ENCODE measurements at regions of chr7 and their contacts with region 1.

Region 1: GRCh38 chr7:158885624-158886023 is 29.3 kb downstream of the DYNC2I1 start:
- DNase-seq: peak; percentile 29 to 54 (median 53)
- H3K4me3 ChIP-seq: no peak overlapping the region
- H3K27ac ChIP-seq: no peak overlapping the region
- H3K4me1 ChIP-seq: no peaks in the 10 kb centered on the region
- H3K27me3 ChIP-seq: no peaks in the 10 kb centered on the region

Region 2: GRCh38 chr7:158461824-158462223 is 423.8 kb before region 1 on chr7:
- CTCF ChIA-PET with region 1: no interaction called
- POLR2A ChIA-PET with region 1: no interaction called
- DNase-seq: no peak
- H3K4me3 ChIP-seq: no peak overlapping the region
- H3K27ac ChIP-seq: no peak overlapping the region
- H3K4me1 ChIP-seq: no peaks in the 10 kb centered on the region
- H3K27me3 ChIP-seq: peaks cover 0 to 1% (median 0%) of the 10 kb centered on the region in 5 experiments

Region 3: GRCh38 chr7:158863611-158864506 is 21.8 kb before region 1 on chr7:
- CTCF ChIA-PET with region 1: interaction called, 11 read pairs
- POLR2A ChIA-PET with region 1: no interaction called
- DNase-seq: peak; percentile 35 to 70 (median 65)
- H3K4me3 ChIP-seq: peak overlapping the region; percentile 20 to 77 (median 48)
- H3K27ac ChIP-seq: peak overlapping the region; percentile 61 to 76
- H3K4me1 ChIP-seq: peaks cover 0 to 64% (median 56%) of the 10 kb centered on the region in 4 experiments
- H3K27me3 ChIP-seq: no peaks in the 10 kb centered on the region

Region 4: DNA sequence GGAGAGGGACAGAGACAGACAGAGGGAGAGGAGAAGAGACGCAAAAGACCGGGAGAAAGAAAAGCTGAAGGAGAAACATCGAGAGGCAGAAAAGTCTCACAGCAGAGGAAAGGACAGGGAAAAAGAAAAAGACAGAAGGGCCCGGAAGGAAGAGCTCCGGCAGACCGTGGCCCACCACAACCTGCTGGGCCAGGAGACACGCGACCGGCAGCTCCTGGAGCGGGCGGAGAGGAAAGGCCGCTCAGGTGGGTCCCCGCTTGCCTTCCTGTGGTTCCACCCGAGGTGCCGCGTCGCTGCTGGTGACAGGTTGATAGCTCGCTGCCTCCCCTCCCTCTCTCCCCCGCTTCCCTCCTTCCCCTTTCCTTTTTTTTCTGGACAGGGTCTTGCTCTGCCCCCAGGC is 14.3 kb before region 1 on chr7:
- CTCF ChIA-PET with region 1: interaction called, 11 read pairs
- POLR2A ChIA-PET with region 1: no interaction called
- DNase-seq: peak in 1 of 3 donors; percentile 29
- H3K4me3 ChIP-seq: peak overlapping the region in 2 of 7 experiments; percentile 8 to 25
- H3K27ac ChIP-seq: no peak overlapping the region
- H3K4me1 ChIP-seq: peaks cover 0 to 33% (median 30%) of the 10 kb centered on the region in 4 experiments
- H3K27me3 ChIP-seq: no peaks in the 10 kb centered on the region

Region 5: DNA sequence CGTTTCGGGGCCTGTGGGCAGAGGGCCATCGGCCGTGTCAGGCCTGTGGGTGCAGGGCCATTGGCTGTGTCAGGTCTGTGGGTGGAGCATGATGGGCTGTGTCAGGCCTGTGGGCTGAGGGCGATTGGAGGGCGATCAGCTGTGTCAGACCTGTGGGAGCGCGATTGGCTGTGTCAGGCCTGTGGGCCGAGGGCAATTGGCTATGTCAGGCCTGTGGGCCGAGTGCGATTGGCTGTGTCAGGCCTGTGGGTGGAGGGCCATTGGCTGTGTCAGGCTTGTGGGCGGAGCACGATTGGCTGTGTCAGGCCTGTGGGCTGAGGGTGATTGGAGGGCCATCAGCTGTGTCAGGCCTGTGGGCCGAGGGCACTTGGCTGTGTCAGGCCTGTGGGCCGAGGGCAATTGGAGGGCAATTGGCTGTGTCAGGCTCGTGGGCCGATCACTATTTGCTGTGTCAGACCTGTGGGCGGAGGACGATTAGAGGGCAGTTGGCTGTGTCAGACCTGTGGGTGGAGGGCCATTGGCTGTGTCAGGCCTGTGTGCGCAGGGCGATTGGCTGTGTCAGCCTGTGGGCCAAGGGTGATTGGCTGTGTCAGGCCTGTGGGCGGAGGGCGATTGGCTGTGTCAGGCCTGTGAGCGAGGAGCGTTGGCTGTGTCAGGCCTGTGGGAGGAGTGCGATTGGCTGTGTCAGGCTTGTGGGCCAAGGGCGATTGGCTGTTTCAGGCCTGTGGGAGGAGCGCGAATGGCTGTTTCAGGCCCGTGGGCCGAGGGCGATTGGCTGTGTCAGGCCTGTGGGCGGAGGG is 24.8 kb after region 1 on chr7:
- CTCF ChIA-PET with region 1: no interaction called
- POLR2A ChIA-PET with region 1: no interaction called
- DNase-seq: no peak
- H3K4me3 ChIP-seq: no peak overlapping the region
- H3K27ac ChIP-seq: no peak overlapping the region
- H3K4me1 ChIP-seq: no peaks in the 10 kb centered on the region
- H3K27me3 ChIP-seq: no peaks in the 10 kb centered on the region

Region 6: GRCh38 chr7:158976849-158977593 is 91.4 kb after region 1 on chr7:
- CTCF ChIA-PET with region 1: interaction called, 21 read pairs
- POLR2A ChIA-PET with region 1: no interaction called
- DNase-seq: peak; percentile 88 to 91 (median 89)
- H3K4me3 ChIP-seq: peak overlapping the region; percentile 23 to 86 (median 56)
- H3K27ac ChIP-seq: no peak overlapping the region
- H3K4me1 ChIP-seq: peaks cover 0 to 15% (median 13%) of the 10 kb centered on the region in 4 experiments
- H3K27me3 ChIP-seq: no peaks in the 10 kb centered on the region